Activated B cell treated with CpG ODN at 0.5 μM for 24 hours (primary cell): ENCODE measurements at regions of chr14 and their contacts with region 1.

Region 1: DNA sequence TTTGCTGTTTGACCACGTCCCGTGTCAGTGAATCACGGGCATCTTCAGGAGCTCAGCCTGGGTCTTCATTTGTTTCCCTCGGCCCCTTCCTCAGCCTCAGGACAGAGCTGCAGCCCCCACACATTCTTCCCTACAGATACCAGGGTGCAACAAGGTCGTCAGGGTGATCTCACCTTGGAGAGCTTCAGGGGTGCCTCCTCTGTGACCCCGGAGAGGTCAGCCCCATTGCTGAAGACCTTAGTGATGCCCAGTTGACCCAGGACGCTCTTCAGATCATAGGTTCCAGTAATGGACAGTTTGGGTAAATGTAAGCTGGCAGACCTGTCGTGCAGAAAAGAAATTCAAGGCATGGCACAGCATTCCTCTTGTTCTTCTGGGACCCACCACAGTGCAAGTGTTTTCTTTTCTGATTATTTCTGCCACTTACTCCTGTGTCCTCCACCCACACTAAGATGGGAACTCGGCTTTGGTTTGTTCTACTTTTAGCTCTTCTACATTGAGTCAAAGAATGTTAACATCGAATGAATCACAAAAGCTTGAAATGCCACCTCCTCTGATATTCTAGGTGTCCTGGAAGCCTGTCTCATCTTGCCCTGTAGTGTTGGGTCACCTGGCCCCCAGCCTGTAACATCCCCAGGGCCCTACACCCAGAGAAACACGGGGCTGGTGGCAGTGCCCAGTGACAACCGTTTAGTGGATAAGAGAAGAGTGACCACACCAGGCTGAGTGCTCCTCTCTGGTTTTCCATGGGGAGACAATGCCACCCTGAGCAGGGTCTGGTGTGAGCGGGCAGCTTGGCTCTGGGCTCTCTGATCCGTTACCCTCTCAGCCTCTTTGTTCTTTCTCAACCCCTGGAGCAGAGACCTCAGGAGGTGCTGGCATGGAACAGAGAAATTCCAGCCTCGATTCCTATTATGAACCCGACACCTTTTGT is 8.8 kb downstream of the SERPINA1 start:
- DNase-seq: no peak
- ATAC-seq: no peak
- H3K4me3 Mint-ChIP-seq: no peak overlapping the region
- H3K27ac Mint-ChIP-seq: no peak overlapping the region
- H3K4me1 Mint-ChIP-seq: no peaks in the 10 kb centered on the region
- H3K27me3 Mint-ChIP-seq: peaks cover 3% of the 10 kb centered on the region
- CTCF ChIP-seq: no peak

Region 2: DNA sequence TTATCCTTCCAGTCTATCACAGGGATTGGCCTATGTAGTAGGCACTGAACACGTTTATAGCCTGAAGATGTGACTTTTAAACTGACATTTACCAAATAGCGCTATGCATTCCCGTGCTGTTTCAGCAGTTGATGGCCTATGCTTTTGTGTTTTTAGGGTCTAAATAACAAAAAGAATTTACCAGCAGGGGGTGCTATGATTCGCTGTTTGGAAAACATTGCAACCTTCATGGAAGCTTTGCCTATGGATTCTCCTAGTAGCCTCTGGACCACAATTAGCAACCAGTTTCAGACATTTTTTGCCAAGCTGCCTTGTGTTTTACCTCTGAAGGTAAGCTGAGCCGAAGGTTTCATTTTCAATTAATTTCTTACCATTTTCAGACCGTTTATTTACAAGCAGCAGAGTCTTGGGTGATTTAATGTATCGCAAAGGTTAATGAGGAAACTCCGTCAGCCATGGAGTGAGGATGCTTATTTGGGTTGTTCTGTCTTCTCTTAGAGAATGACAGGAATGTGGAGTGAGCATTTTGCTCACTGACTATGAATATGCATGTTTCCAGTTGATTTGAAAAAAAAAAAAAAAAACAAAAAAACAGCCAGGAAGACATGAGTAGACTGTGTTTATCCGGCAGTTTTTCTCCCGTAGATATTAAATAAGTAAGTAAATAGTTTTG is 724.3 kb before region 1 on chr14:
- CTCF ChIA-PET with region 1: no interaction called
- POLR2A ChIA-PET with region 1: no interaction called
- intact Hi-C with region 1: no loop called
- DNase-seq: no peak
- ATAC-seq: no peak
- H3K4me3 Mint-ChIP-seq: no peak overlapping the region
- H3K27ac Mint-ChIP-seq: no peak overlapping the region
- H3K4me1 Mint-ChIP-seq: no peaks in the 10 kb centered on the region
- H3K27me3 Mint-ChIP-seq: peaks cover 31% of the 10 kb centered on the region
- CTCF ChIP-seq: no peak

Region 3: DNA sequence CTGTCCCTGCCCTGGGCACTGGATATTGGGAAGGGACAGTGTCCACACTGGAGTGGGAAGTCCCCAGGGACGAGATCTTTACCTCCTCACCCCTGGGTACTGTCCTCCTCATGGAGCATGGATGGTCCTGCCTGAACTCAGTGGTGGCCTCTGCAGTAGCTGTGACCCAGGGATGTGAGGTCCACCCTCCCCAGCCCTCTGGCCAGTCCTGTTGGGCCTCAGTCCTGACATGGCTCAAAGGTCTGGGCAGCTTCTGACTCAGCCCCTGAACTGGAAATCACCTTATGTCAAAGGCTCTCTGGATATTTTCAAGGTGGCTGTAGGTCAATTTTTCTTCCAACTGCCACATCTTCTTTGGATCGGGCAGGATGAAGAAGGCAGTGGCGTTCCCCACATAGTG is 15.5 kb before region 1 on chr14:
- CTCF ChIA-PET with region 1: no interaction called
- POLR2A ChIA-PET with region 1: no interaction called
- intact Hi-C with region 1: loop called (anchors 2 kb)
- DNase-seq: no peak
- ATAC-seq: no peak
- H3K4me3 Mint-ChIP-seq: no peak overlapping the region
- H3K27ac Mint-ChIP-seq: no peak overlapping the region
- H3K4me1 Mint-ChIP-seq: no peaks in the 10 kb centered on the region
- H3K27me3 Mint-ChIP-seq: peaks cover 11% of the 10 kb centered on the region
- CTCF ChIP-seq: no peak